Naive thymus-derived CD4-positive, alpha-beta T cell (primary cell): ENCODE measurements at regions of chr3 and their contacts with region 1.

Region 1: GRCh38 chr3:71195492-71195891 is 388.0 kb downstream of the FOXP1 start:
- DNase-seq: no peak
- ATAC-seq: no peak
- H3K4me3 ChIP-seq: no peak overlapping the region
- H3K4me3 Mint-ChIP-seq: no peak overlapping the region
- H3K27ac ChIP-seq: no peak overlapping the region
- H3K27ac Mint-ChIP-seq: peak overlapping the region in 5 of 9 donors; percentile 10 to 78 (median 46)
- H3K4me1 ChIP-seq: no peaks in the 10 kb centered on the region
- H3K4me1 Mint-ChIP-seq: peaks cover 13 to 74% (median 68%) of the 10 kb centered on the region in 7 donors
- H3K27me3 ChIP-seq: no peaks in the 10 kb centered on the region
- H3K27me3 Mint-ChIP-seq: no peaks in the 10 kb centered on the region

Region 2: DNA sequence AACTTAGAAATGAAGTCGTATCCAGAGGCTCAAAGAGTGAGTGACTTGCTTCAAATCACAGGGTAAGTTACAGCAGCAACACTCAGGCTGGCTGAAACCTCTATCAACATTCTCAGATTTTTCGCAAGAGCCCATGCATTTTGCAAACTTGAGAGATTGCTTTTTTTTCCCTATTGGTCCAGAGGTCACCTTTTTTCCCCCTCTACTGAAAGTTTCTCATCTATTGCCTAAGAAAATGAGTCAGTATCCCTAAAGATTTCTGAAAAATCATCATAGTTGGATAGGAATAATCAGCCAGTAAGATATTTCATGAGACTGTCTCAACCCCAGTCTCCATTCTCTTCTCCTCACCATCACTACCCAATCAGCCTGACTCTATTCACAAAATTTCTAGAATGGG is 22.5 kb before region 1 on chr3:
- CTCF ChIA-PET with region 1: no interaction called
- POLR2A ChIA-PET with region 1: no interaction called
- intact Hi-C with region 1: loop called in 1 of 2 experiments (anchors 2 kb)
- DNase-seq: no peak
- ATAC-seq: no peak
- H3K4me3 ChIP-seq: no peak overlapping the region
- H3K4me3 Mint-ChIP-seq: peak overlapping the region in 1 of 10 donors; percentile 1
- H3K27ac ChIP-seq: no peak overlapping the region
- H3K27ac Mint-ChIP-seq: peak overlapping the region in 8 of 9 donors; percentile 55 to 84 (median 81)
- H3K4me1 ChIP-seq: no peaks in the 10 kb centered on the region
- H3K4me1 Mint-ChIP-seq: peaks cover 0 to 89% (median 72%) of the 10 kb centered on the region in 7 donors
- H3K27me3 ChIP-seq: no peaks in the 10 kb centered on the region
- H3K27me3 Mint-ChIP-seq: no peaks in the 10 kb centered on the region